Mammary epithelial cell (primary cell): ENCODE measurements at regions of chr15 and their contacts with region 1.

Region 1: GRCh38 chr15:37891766-37892368 is 42.6 kb upstream of the TMCO5A start:
- DNase-seq: peak; percentile 42
- H3K4me3 ChIP-seq: no peak overlapping the region
- H3K27ac ChIP-seq: no peak overlapping the region
- H3K4me1 ChIP-seq: no peaks in the 10 kb centered on the region
- H3K27me3 ChIP-seq: no peaks in the 10 kb centered on the region
- CTCF ChIP-seq: peak; percentile 90

Region 2: DNA sequence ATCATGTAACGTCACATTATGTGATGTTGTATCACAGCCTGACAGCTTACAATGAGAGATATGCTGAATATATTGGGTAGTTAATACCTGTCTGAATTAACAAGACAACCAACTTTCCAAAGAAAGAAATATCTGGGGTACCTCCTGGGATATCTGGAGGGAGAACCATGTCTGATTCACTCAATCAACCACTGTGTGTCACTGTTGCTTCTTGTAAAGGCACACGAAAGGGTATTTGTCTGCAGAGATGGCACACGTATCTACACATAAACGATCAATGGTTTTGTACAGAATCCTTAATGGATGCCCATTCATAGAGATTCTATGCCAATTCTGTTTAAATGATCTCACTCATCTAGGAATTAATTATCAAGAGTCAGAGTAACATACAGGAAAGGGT is 209.6 kb before region 1 on chr15:
- CTCF ChIA-PET with region 1: no interaction called
- dilution Hi-C with region 1: no loop called
- in situ Hi-C with region 1: loop called in 1 of 2 experiments (anchors 25 kb)
- intact Hi-C with region 1: no loop called
- DNase-seq: peak; percentile 11
- H3K4me3 ChIP-seq: no peak overlapping the region
- H3K27ac ChIP-seq: no peak overlapping the region
- H3K4me1 ChIP-seq: no peaks in the 10 kb centered on the region
- H3K27me3 ChIP-seq: no peaks in the 10 kb centered on the region
- CTCF ChIP-seq: peak; percentile 20 to 36